ENCODE measurements at regions of chr4 and their contacts with region 1.

Region 1: DNA sequence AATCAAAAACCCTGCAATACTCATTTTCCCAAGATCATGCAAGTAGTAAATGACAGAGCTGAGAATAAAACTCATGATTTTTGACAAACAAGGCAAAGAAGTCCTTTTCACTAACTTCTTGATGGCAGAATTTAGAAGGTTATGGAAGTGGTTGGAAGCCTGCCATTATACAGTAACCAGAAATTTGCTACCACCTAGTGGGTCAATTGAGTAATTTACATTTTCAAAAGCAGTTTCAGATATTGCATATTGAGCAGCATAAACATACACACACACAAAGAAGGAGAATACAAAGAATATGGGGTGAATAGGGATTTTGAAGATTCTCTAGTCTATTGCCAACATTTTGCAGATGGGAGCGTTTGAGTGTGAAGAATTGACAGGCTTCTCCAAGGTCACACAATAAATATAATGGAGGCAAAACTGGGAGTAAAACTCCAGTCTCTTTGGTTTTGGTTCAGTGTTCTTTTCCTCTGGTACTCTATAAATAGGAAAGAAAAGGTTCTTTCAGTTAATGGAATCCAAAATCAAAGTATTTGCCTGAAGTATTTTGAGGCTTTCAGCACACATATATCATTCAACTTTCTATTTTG is 70.2 kb downstream of the GC start:
- DNase-seq: no peak
- H3K4me3 Mint-ChIP-seq: no peak overlapping the region
- H3K27ac Mint-ChIP-seq: no peak overlapping the region
- H3K4me1 Mint-ChIP-seq: no peaks in the 10 kb centered on the region
- H3K27me3 Mint-ChIP-seq: peaks cover 2% of the 10 kb centered on the region

Region 2: DNA sequence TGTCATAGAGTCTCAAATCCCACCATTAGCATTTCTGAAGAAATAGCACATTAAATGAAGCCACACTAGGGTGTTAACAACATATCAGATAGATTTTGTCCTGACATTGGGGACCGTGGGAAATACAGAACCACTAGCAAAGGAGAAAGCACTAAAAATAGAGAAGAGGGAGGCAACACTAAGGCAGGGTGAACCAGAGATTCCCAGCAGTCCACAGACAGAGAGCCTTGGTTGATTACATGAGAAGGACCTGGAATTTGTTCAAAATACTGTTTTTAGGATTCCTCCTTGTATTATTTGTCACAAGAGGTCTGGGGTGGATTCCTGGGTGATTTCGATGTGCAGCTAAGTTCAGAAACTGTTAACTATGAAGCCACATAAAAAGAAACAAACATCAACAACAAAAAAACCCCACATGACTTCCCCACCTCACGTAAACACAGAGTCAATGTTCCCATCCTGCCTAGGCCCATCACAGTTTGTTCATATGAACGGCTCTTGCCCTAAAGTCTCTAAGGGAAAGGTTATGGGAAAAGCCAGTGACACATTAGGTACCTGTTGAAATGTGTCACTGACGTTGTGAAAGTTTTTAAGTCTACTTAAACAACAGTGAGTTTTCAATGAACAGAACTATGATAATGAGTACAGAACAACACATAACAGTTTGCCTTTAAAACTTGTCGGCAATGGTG is 850.5 kb before region 1 on chr4:
- CTCF ChIA-PET with region 1: no interaction called
- POLR2A ChIA-PET with region 1: no interaction called
- intact Hi-C with region 1: no loop called
- DNase-seq: peak; percentile 39
- H3K4me3 Mint-ChIP-seq: no peak overlapping the region
- H3K27ac Mint-ChIP-seq: peak overlapping the region; percentile 57
- H3K4me1 Mint-ChIP-seq: peaks cover 12% of the 10 kb centered on the region
- H3K27me3 Mint-ChIP-seq: no peaks in the 10 kb centered on the region

Region 3: DNA sequence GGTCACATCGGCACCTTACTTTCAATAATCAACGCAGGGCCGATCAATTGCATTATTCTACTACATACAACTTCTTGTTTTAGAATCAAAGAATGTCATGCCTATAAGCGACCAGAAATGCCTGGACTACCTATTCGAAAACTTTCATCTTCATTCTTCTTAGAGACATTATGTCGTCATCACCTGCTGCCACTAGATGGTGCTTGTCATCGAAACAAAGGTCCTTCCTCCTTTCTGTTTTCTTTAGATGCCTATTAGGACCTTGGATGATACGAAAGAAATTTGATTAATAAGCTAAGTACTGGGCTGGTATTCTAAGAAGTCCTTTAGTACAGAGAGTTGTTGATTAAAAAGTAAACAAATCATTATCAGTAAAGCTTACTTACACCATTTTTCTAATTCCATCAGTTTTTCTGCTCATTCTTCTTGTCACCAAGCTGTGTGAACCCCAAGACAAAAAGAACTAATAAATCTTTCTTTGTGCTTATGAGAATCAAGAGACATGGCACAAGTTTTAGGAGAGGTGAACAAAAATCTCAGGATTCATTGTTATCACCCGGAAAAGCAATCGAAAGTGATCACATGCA is 529.4 kb before region 1 on chr4:
- CTCF ChIA-PET with region 1: interaction called, 11 read pairs
- POLR2A ChIA-PET with region 1: no interaction called
- intact Hi-C with region 1: loop called (anchors 1 kb)
- DNase-seq: peak; percentile 44
- H3K4me3 Mint-ChIP-seq: no peak overlapping the region
- H3K27ac Mint-ChIP-seq: no peak overlapping the region
- H3K4me1 Mint-ChIP-seq: peaks cover 27% of the 10 kb centered on the region
- H3K27me3 Mint-ChIP-seq: peaks cover 27% of the 10 kb centered on the region

Region 4: DNA sequence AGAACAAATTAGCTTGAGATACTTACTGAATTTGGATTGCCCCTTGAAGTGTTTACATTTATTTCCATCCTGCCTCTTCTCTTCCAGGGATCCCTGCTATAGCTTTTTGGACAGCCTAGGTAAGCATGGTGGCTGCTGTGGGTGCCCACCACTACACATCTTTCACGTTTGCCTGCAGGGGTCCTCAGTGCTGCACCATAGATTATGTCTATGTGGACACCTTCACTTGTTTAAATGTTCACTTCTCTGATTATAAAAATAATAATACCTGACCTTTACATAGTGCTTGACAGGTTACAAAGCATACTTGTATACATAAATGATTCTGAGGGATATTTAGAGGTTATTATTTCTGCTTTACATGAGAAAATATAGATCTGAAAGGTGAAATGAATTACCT is 442.8 kb before region 1 on chr4:
- CTCF ChIA-PET with region 1: interaction called, 8 read pairs
- POLR2A ChIA-PET with region 1: no interaction called
- intact Hi-C with region 1: loop called (anchors 5 kb)
- DNase-seq: peak; percentile 39
- H3K4me3 Mint-ChIP-seq: no peak overlapping the region
- H3K27ac Mint-ChIP-seq: no peak overlapping the region
- H3K4me1 Mint-ChIP-seq: peaks cover 10% of the 10 kb centered on the region
- H3K27me3 Mint-ChIP-seq: peaks cover 2% of the 10 kb centered on the region

Measured in activated CD4-positive, alpha-beta memory T cell treated with anti-CD3 and anti-CD28 coated beads for 36 hours (primary cell).